Heart right ventricle (tissue), 16 donors: ENCODE measurements at regions of chr5 and their contacts with region 1.

Region 1: DNA sequence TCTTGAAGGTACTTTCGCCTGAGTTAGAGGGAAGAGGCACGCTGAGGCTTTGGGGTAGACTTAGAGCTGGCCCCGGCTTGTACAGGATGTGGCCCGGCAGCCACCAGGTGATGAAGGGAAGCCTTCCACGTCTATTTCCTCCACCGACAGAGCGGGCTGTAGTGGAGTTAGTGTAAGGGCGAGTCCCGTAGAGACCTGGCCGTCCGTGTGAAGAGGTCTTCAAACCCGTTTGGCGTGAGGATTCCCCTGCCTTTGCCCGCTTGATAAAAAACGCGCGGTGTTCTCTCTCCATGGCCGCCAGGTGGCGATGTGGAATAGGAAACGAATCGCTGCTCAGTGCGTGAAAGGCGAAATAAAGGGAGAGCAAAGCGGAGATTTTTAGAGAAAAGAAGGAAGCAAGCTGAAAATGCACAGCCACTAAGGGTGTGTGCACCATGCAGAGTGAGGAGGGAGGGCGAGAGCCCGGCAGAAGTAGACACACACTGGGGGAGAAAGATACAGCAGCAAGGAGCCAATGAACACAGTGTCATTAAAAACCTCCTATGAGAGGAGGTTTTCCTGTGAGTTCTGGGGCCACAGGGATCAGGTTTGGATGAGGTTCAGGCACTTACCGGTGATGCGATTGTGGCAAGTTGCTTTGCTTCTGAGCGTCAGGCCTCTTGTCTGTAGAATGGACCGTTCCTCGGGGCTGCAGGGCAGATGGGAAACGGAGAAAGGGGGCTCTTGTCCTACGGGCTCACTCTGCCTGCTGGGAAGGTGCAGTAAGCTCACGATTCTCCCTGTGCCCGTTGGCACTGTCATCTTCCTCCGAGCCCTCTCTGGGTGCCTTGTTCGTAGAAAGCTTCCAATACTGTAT is 34.2 kb downstream of the STC2 start:
- DNase-seq: peak; percentile 70 to 76
- ATAC-seq: peak; percentile 6 to 75 (median 66)
- H3K4me3 ChIP-seq: peak overlapping the region in 7 of 10 donors; percentile 4 to 31 (median 16)
- H3K27ac ChIP-seq: no peak overlapping the region
- H3K4me1 ChIP-seq: peaks cover 0 to 23% (median 9%) of the 10 kb centered on the region in 9 donors
- H3K27me3 ChIP-seq: peaks cover 0 to 57% (median 8%) of the 10 kb centered on the region in 7 donors
- CTCF ChIP-seq: peak; percentile 71 to 94 (median 89)

Region 2: GRCh38 chr5:173310861-173311785 is 17.1 kb after region 1 on chr5:
- intact Hi-C with region 1: loop called in 1 of 10 experiments (anchors 1 kb)
- DNase-seq: peak in 1 of 2 donors; percentile 53
- ATAC-seq: peak; percentile 11 to 73 (median 36)
- H3K4me3 ChIP-seq: no peak overlapping the region
- H3K27ac ChIP-seq: peak overlapping the region in 5 of 10 donors; percentile 8 to 61 (median 37)
- H3K4me1 ChIP-seq: peaks cover 12 to 39% (median 26%) of the 10 kb centered on the region in 9 donors
- H3K27me3 ChIP-seq: peaks cover 0 to 7% (median 0%) of the 10 kb centered on the region in 7 donors
- CTCF ChIP-seq: no peak

Region 3: DNA sequence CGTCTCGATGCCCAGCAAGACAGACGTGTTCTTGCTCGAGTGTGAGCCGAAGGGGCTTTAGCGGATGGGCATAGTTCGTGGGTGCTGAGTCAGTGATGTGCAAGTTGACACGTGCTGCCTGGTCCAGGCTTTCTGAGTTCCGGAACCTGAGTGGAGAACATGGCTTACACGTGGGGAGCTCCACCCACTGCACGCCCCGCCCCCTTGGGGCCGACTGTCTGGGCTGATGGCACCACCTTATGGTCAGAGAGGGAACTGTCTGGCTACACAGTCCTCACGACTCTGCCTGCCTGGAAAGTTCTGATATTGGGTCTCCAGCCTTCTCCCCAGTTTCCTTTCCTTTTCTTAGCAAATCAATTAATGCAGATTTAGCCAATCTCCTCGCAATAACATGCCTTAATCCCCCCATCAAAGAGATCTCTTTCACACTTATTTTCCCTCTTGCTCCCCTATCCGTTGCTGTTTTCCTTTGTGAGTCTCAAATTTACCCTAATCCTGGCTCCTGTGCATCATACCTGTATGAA is 38.0 kb after region 1 on chr5:
- intact Hi-C with region 1: loop called (anchors 1 to 5 kb)
- DNase-seq: peak; percentile 83 to 85
- ATAC-seq: peak; percentile 77 to 88 (median 80)
- H3K4me3 ChIP-seq: no peak overlapping the region
- H3K27ac ChIP-seq: no peak overlapping the region
- H3K4me1 ChIP-seq: peaks cover 5 to 37% (median 29%) of the 10 kb centered on the region in 9 donors
- H3K27me3 ChIP-seq: peaks cover 0 to 61% (median 14%) of the 10 kb centered on the region in 7 donors
- CTCF ChIP-seq: peak; percentile 84 to 96 (median 93)

Region 4: GRCh38 chr5:173498286-173498685 is 204.2 kb after region 1 on chr5:
- intact Hi-C with region 1: loop called in 1 of 10 experiments (anchors 10 kb)
- DNase-seq: peak in 1 of 2 donors; percentile 22
- ATAC-seq: peak in 7 of 8 donors; percentile 25 to 74 (median 57)
- H3K4me3 ChIP-seq: no peak overlapping the region
- H3K27ac ChIP-seq: peak overlapping the region in 9 of 10 donors; percentile 34 to 82 (median 69)
- H3K4me1 ChIP-seq: peaks cover 8 to 37% (median 31%) of the 10 kb centered on the region in 9 donors
- H3K27me3 ChIP-seq: no peaks in the 10 kb centered on the region
- CTCF ChIP-seq: no peak

Region 5: GRCh38 chr5:173573126-173573960 is 279.3 kb after region 1 on chr5:
- intact Hi-C with region 1: loop called (anchors 2 to 5 kb)
- DNase-seq: peak; percentile 71 to 84
- ATAC-seq: peak; percentile 89 to 96 (median 94)
- H3K4me3 ChIP-seq: peak overlapping the region in 3 of 10 donors; percentile 18 to 30 (median 29)
- H3K27ac ChIP-seq: no peak overlapping the region
- H3K4me1 ChIP-seq: peaks cover 0 to 14% (median 5%) of the 10 kb centered on the region in 9 donors
- H3K27me3 ChIP-seq: peaks cover 0 to 10% (median 0%) of the 10 kb centered on the region in 7 donors
- CTCF ChIP-seq: peak; percentile 93 to 99 (median 97)

Region 6: GRCh38 chr5:173984218-173984617 is 690.2 kb after region 1 on chr5:
- intact Hi-C with region 1: loop called in 3 of 10 experiments (anchors 10 kb)
- DNase-seq: no peak
- ATAC-seq: peak in 6 of 8 donors; percentile 42 to 81 (median 66)
- H3K4me3 ChIP-seq: no peak overlapping the region
- H3K27ac ChIP-seq: no peak overlapping the region
- H3K4me1 ChIP-seq: no peaks in the 10 kb centered on the region
- H3K27me3 ChIP-seq: peaks cover 0 to 20% (median 0%) of the 10 kb centered on the region in 7 donors
- CTCF ChIP-seq: peak in 7 of 9 donors; percentile 39 to 58 (median 49)

Region 7: DNA sequence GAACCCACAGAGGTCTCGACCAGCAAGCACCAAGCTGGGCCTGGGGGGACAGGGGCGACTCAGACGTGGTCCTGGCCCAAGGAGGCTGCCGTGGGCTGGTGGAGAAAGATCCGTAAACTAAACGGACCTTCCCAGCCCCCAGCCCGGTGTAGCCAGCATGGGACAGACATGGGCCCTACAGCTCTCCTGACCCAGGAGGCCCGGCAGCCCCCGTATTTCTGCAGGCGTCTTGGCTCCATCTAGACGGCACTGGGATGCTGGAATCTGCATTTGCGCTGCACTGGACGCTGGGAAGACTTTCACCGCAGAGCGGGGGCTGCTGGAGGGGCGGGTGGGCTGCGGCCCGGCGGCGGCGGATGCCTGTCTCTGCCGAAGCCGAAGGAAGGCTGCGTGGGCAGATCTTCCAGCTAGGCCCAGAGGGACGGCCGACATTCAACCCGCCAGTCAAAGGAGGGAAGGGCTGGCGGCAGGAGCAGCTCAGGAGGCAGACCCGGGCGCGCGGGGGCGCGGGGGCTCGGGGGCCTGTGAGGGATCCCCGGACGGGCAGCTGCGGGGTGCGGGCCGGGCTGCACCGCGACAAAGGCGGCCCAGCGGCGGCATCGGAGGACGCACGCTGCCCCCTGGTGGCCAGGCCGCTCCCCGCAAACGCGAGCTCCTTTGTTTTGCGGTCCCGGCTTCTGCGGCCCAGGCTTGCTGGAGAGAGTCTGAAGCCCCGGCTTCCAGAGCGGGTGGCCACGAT is 1017.7 kb after region 1 on chr5:
- intact Hi-C with region 1: loop called in 2 of 10 experiments (anchors 5 to 10 kb)
- DNase-seq: peak; percentile 61 to 74
- ATAC-seq: peak; percentile 56 to 87 (median 78)
- H3K4me3 ChIP-seq: peak overlapping the region in 9 of 10 donors; percentile 19 to 61 (median 50)
- H3K27ac ChIP-seq: no peak overlapping the region
- H3K4me1 ChIP-seq: peaks cover 0 to 14% (median 7%) of the 10 kb centered on the region in 9 donors
- H3K27me3 ChIP-seq: peaks cover 0 to 45% (median 33%) of the 10 kb centered on the region in 7 donors
- CTCF ChIP-seq: peak; percentile 72 to 91 (median 90)